Tibial artery (tissue), 4 donors: ENCODE measurements at regions of chr18 and their contacts with region 1.

Region 1: DNA sequence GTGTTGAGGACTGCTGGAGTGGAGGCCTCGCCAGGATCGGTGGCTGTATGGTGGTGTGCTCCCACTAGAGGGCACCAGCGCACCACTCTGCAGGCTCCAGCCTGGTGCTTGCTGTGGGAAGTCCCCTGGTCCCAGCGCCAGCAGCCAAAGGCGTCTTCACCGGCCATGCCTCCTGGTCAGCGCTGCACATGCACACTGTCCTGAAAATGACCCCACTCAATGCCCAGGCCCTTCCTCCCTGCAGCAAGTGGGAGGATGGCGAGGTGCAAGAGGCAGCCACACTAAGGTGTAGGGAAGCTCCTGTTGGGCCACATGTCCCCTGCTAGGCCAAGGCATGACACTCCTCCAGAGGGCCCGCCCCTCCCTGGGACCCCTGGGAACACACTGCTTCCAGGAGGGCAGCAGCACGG is 136.5 kb downstream of the CTIF start:
- DNase-seq: peak; percentile 83 to 94
- H3K4me3 ChIP-seq: no peak overlapping the region
- H3K27ac ChIP-seq: peak overlapping the region; percentile 85 to 97
- H3K4me1 ChIP-seq: peaks cover 0 to 54% (median 38%) of the 10 kb centered on the region in 4 donors
- H3K27me3 ChIP-seq: no peaks in the 10 kb centered on the region
- CTCF ChIP-seq: peak; percentile 94 to 96

Region 2: DNA sequence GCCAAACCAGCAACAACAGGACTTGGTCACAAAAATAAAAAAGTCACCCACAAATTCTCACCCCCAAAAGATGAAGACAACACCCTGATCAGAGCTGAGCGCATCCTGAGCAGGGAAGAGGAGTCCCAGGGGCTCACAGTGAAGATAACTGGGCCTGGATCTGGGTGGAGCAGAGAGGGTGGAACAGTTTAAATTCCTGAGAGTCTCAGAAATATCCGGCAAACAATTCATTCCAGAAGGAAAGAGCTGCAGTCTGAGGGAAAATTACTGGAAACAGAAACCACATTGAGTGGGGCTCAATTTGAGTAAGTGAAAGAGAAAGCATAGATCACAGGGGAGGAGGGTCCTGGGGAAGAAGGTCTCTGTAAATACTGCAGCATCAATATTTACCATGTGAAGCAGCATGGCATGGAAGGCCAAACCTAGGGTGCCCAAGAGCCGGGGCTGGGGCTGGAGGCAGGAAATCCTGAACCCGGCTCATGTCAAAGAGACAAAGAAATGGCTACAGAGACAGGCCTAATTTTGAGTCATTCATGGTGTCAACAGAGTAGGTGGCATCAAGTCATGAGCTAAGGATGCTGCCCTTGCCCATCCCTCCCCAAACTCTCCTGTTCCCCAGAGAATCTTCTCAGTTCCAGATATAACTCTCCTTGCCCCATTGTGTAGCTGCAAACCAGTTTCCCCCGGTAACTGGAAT is 204.7 kb before region 1 on chr18:
- intact Hi-C with region 1: no loop called
- DNase-seq: no peak
- H3K4me3 ChIP-seq: no peak overlapping the region
- H3K27ac ChIP-seq: peak overlapping the region; percentile 7 to 24
- H3K4me1 ChIP-seq: peaks cover 0 to 9% (median under 1%) of the 10 kb centered on the region in 4 donors
- H3K27me3 ChIP-seq: no peaks in the 10 kb centered on the region
- CTCF ChIP-seq: no peak

Region 3: GRCh38 chr18:48771641-48772375 is 96.5 kb after region 1 on chr18:
- intact Hi-C with region 1: loop called (anchors 5 kb)
- DNase-seq: no peak
- H3K4me3 ChIP-seq: no peak overlapping the region
- H3K27ac ChIP-seq: peak overlapping the region; percentile 77 to 85
- H3K4me1 ChIP-seq: peaks cover 0 to 53% (median 22%) of the 10 kb centered on the region in 4 donors
- H3K27me3 ChIP-seq: no peaks in the 10 kb centered on the region
- CTCF ChIP-seq: no peak

Region 4: GRCh38 chr18:49178736-49179135 is 503.4 kb after region 1 on chr18:
- intact Hi-C with region 1: loop called (anchors 5 kb)
- DNase-seq: no peak
- H3K4me3 ChIP-seq: no peak overlapping the region
- H3K27ac ChIP-seq: no peak overlapping the region
- H3K4me1 ChIP-seq: peaks cover 0 to 25% (median 2%) of the 10 kb centered on the region in 4 donors
- H3K27me3 ChIP-seq: no peaks in the 10 kb centered on the region
- CTCF ChIP-seq: peak; percentile 43 to 56

Region 5: DNA sequence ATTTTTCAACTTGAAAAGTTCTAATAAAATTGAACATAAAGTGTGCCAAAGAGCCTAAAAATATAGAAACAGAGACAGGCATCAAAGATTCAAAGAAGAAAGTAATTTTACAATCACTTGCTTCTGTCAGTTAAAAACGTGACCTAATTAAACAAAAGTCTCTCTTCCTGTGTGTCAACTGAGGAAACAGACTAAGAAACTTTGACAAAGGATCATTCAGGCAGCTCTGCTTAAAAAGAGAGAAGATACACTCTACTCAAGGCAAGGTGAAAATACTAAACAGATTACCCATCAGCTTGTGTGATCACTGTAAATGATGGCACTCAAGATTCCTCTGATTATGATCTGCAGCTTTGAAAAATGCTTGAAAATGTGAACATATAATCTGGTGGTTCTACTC is 737.3 kb after region 1 on chr18:
- intact Hi-C with region 1: loop called (anchors 10 kb)
- DNase-seq: no peak
- H3K4me3 ChIP-seq: no peak overlapping the region
- H3K27ac ChIP-seq: no peak overlapping the region
- H3K4me1 ChIP-seq: peaks cover 0 to 19% (median 0%) of the 10 kb centered on the region in 4 donors
- H3K27me3 ChIP-seq: no peaks in the 10 kb centered on the region
- CTCF ChIP-seq: no peak

Region 6: GRCh38 chr18:49795612-49796552 is 1120.5 kb after region 1 on chr18:
- intact Hi-C with region 1: loop called (anchors 5 kb)
- DNase-seq: no peak
- H3K4me3 ChIP-seq: no peak overlapping the region
- H3K27ac ChIP-seq: no peak overlapping the region
- H3K4me1 ChIP-seq: no peaks in the 10 kb centered on the region
- H3K27me3 ChIP-seq: no peaks in the 10 kb centered on the region
- CTCF ChIP-seq: no peak